Ovary (tissue), 10 donors: ENCODE measurements at regions of chr11 and their contacts with region 1.

Region 1: GRCh38 chr11:86041975-86042378 is 26.9 kb downstream of the PICALM start:
- DNase-seq: peak in 4 of 5 donors; percentile 42 to 83 (median 61)
- H3K4me3 ChIP-seq: peak overlapping the region; percentile 6
- H3K27ac ChIP-seq: peak overlapping the region in 1 of 2 donors; percentile 47
- H3K4me1 ChIP-seq: peaks cover 3% of the 10 kb centered on the region
- H3K27me3 ChIP-seq: no peaks in the 10 kb centered on the region
- CTCF ChIP-seq: peak; percentile 83 to 96 (median 96)
- EP300 ChIP-seq: no peak
- POLR2A ChIP-seq: no peak

Region 2: DNA sequence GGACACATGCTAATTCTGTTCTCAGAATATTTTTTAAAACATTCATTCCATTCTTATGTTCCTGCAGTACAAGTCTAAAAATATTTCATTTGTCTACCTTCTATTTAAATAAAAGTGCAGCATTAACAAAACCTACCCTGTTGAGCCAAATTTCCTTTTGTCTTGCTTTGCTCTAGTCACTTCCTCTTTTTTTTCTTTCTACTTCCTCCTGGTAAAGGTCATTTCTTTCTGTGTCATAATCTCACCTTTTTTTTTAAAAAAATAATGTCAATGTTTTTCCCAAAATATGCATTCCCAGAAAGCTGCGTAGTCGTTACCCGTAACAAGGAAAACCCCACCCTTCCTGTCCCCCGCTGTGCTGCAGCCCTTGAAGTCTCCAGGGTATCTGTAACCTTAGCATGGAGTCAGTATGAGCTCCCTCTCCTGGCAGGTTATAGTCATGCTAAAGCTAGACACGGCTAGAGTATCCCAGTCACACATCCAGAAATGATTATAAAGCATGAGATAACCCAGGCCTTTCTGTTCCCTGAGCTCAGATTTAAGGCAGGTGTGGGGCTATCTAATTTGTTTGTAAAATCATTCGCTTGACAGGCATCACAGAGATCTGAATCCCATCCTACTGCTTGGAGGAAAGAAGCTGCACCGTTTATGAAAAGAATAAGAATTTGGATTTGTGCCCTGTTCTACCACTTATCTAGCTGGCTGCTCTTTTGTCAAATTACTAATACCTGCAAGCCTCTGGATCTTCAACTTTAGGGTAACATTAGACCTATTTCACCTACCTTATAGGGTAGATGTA is 151.5 kb after region 1 on chr11:
- intact Hi-C with region 1: loop called in 2 of 4 experiments (anchors 10 kb)
- DNase-seq: peak in 4 of 5 donors; percentile 28 to 54 (median 46)
- H3K4me3 ChIP-seq: no peak overlapping the region
- H3K27ac ChIP-seq: no peak overlapping the region
- H3K4me1 ChIP-seq: peaks cover 6% of the 10 kb centered on the region
- H3K27me3 ChIP-seq: no peaks in the 10 kb centered on the region
- CTCF ChIP-seq: peak in 1 of 3 donors; percentile 17
- EP300 ChIP-seq: no peak
- POLR2A ChIP-seq: no peak

Region 3: DNA sequence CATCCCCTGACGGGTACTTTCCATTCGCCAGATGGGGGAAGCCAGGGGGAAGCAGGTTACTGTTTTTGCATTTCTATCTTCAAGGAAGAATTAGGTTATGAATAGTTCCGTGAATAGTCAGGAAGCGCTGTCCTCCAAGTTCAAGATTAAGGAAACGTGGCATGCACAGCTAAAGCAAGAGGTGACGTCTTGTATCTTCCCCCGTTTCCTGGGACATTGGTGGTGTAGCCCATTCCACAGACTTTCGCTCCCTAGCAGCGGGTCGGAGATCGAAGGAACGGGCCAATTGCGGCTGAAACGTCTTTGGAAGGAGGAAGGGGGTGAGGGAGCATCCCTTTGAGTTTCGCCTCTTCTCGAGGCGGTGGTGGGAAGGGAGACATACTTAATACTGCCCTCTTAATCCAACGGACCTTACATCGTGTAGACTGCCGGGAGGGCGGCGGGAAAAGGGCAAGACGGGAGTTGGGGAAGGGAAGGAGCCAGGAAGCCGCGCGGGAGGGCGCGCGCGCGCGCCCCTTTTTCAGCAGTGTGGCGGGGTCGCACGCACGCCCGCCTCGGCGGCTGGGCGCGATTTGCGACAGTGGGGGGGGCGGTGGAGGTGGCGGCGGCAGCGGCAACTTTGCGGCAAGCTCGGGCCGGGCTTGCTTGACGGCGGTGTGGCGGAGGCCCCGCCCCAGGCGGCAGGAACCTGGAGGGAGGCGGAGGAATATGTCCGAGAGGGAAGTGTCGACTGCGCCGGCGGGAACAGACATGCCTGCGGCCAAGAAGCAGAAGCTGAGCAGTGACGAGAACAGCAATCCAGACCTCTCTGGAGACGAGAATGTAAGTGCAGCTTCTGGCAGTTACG is 202.8 kb after region 1 on chr11 and contains the start of gene EED:
- intact Hi-C with region 1: no loop called
- DNase-seq: peak; percentile 95 to 98 (median 96)
- H3K4me3 ChIP-seq: peak within 1 kb of the TSS; percentile 90
- H3K27ac ChIP-seq: peak within 1 kb of the TSS; percentile 69 to 97
- H3K4me1 ChIP-seq: peaks cover 3% of the 10 kb centered on the region
- H3K27me3 ChIP-seq: no peaks in the 10 kb centered on the region
- CTCF ChIP-seq: peak in 2 of 3 donors; percentile 17 to 46
- EP300 ChIP-seq: peak; percentile 8
- POLR2A ChIP-seq: peak; percentile 79
- total RNA-seq, gene EED: 16.2 to 29.4 (median 17.4) TPM